ENCODE measurements at regions of chr7 and their contacts with region 1.

Region 1: GRCh38 chr7:7221602-7222038 is 39.3 kb downstream of the C1GALT1 start:
- DNase-seq: no peak
- ATAC-seq: no peak
- H3K4me3 Mint-ChIP-seq: no peak overlapping the region
- H3K27ac Mint-ChIP-seq: peak overlapping the region; percentile 43
- H3K4me1 Mint-ChIP-seq: peaks cover 23% of the 10 kb centered on the region
- H3K27me3 Mint-ChIP-seq: no peaks in the 10 kb centered on the region
- CTCF ChIP-seq: no peak

Region 2: DNA sequence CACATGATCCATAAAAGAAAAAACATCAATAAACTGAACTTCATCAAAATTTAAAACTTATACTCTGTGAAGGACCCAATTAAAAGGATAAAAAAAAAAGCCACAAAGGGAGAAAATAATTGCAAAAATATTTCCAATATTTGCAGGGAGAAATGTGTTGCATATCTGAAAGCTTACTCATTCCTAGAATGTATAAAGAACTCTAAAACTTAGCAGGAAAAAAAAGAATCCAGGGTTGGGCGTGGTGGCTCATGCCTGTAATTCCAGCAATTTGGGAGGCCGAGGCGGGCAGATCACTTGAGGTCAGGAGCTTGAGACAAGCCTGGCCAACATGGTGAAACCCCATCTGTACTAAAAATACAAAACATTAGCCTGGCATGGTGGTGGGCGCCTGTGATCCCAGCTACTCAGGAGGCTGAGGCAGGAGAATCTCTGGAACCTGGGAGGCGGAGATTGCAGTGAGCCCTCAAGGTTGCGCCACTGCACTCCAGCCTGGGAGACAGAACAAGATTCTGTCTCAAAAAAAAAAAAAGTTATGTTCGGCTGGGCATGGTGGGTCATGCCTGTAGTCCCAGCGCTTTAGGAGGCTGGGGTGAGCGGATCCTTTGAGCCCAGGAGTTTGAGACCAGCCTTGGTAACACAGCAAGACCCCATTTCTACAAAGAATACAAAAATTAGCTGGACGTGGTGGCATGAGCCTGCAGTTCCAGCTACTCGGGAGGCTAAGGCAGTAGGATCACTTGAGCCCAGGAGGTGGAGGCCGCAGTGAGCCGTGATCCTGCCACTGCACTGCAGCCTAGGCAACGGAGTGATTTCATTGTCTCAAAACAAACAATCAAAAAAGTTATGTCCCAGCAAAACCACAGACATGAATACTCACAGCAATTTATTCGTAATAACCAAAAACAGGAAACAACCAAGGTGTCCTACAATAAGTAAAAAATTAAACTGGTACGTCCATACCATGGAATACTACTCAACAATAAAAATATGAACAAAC is 937.9 kb before region 1 on chr7:
- CTCF ChIA-PET with region 1: no interaction called
- POLR2A ChIA-PET with region 1: no interaction called
- intact Hi-C with region 1: no loop called
- DNase-seq: no peak
- ATAC-seq: no peak
- H3K4me3 Mint-ChIP-seq: no peak overlapping the region
- H3K27ac Mint-ChIP-seq: no peak overlapping the region
- H3K4me1 Mint-ChIP-seq: no peaks in the 10 kb centered on the region
- H3K27me3 Mint-ChIP-seq: no peaks in the 10 kb centered on the region
- CTCF ChIP-seq: no peak

Region 3: GRCh38 chr7:7237201-7237977 is 15.8 kb after region 1 on chr7:
- CTCF ChIA-PET with region 1: no interaction called
- POLR2A ChIA-PET with region 1: interaction called, 3 read pairs
- intact Hi-C with region 1: loop called (anchors 2 kb)
- DNase-seq: no peak
- ATAC-seq: no peak
- H3K4me3 Mint-ChIP-seq: no peak overlapping the region
- H3K27ac Mint-ChIP-seq: peak overlapping the region; percentile 41
- H3K4me1 Mint-ChIP-seq: peaks cover 19% of the 10 kb centered on the region
- H3K27me3 Mint-ChIP-seq: no peaks in the 10 kb centered on the region
- CTCF ChIP-seq: no peak

Region 4: GRCh38 chr7:7257899-7258692 is 36.5 kb after region 1 on chr7:
- CTCF ChIA-PET with region 1: no interaction called
- POLR2A ChIA-PET with region 1: no interaction called
- intact Hi-C with region 1: loop called (anchors 2 kb)
- DNase-seq: no peak
- ATAC-seq: peak; percentile 77
- H3K4me3 Mint-ChIP-seq: peak overlapping the region; percentile 78
- H3K27ac Mint-ChIP-seq: peak overlapping the region; percentile 89
- H3K4me1 Mint-ChIP-seq: peaks cover 66% of the 10 kb centered on the region
- H3K27me3 Mint-ChIP-seq: no peaks in the 10 kb centered on the region
- CTCF ChIP-seq: no peak